ENCODE measurements at regions of chr11 and their contacts with region 1.

Region 1: DNA sequence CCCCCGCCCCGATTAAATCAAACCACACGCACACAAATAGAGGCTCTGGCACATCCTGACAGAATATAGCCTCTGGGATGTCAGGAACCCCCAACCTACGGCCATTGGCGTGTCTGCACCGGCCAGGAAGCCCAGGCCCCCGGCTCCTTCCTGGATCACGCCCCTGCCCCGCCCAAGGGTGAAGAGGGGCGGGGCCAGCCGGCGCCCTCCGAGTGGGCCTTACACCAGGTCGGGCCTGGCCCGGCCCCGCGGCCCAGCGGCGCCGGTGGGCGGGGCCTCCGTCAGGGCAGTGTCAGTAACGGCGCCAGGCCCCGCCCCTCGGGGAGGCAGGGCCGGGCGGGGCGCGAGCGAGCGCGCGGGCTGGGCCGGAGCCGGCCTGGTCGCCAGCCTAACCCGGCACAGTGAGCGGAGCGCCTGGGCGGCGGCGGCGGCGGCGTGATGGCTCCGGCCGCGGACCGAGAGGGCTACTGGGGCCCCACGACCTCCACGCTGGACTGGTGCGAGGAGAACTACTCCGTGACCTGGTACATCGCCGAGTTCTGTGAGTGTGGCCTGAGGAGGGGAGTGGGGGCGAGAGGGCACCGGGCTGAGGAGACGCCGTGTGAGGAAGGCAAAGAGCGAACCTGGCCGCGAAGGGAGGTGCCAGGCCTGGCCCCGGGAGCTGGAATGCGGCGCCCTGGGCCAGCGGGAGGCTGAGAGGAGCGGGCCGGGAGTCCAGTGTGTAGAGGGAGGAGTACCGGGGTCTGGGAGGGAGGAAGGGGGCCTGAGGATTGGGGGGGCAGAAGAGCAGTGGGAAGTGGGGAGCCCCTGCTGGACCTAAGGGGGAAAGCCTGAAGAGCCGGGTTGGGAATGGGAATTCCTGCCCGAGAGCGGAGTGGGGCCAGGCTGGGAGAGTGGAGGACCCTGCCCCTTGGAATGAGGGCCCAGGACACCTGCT is at the start of gene ACER3:
- DNase-seq: peak; percentile 89 to 95
- ATAC-seq: peak; percentile 97 to 100 (median 98)
- H3K4me3 ChIP-seq: peak within 1 kb of the TSS; percentile 62 to 94 (median 82)
- H3K27ac ChIP-seq: peak within 1 kb of the TSS; percentile 63 to 95 (median 89)
- H3K4me1 ChIP-seq: peaks cover 0 to 70% (median 32%) of the 10 kb centered on the region in 9 donors
- H3K27me3 ChIP-seq: no peaks in the 10 kb centered on the region
- CTCF ChIP-seq: peak in 4 of 9 donors; percentile 12 to 36 (median 32)
- total RNA-seq, gene ACER3: 8.9 to 14.8 (median 10.6) TPM

Region 2: GRCh38 chr11:76903329-76903728 is 42.5 kb after region 1 on chr11:
- intact Hi-C with region 1: loop called in 1 of 10 experiments (anchors 5 kb)
- DNase-seq: no peak
- ATAC-seq: no peak
- H3K4me3 ChIP-seq: no peak overlapping the region
- H3K27ac ChIP-seq: no peak overlapping the region
- H3K4me1 ChIP-seq: peaks cover 0 to 3% (median 0%) of the 10 kb centered on the region in 9 donors
- H3K27me3 ChIP-seq: no peaks in the 10 kb centered on the region
- CTCF ChIP-seq: no peak

Region 3: GRCh38 chr11:77039491-77040400 is 178.9 kb after region 1 on chr11:
- intact Hi-C with region 1: no loop called
- DNase-seq: peak in 1 of 2 donors; percentile 28
- ATAC-seq: peak; percentile 35 to 80 (median 45)
- H3K4me3 ChIP-seq: peak overlapping the region; percentile 12 to 54 (median 42)
- H3K27ac ChIP-seq: no peak overlapping the region
- H3K4me1 ChIP-seq: peaks cover 2 to 14% (median 11%) of the 10 kb centered on the region in 9 donors
- H3K27me3 ChIP-seq: peaks cover 7 to 74% (median 66%) of the 10 kb centered on the region in 7 donors
- CTCF ChIP-seq: peak in 7 of 9 donors; percentile 34 to 55 (median 46)

Region 4: DNA sequence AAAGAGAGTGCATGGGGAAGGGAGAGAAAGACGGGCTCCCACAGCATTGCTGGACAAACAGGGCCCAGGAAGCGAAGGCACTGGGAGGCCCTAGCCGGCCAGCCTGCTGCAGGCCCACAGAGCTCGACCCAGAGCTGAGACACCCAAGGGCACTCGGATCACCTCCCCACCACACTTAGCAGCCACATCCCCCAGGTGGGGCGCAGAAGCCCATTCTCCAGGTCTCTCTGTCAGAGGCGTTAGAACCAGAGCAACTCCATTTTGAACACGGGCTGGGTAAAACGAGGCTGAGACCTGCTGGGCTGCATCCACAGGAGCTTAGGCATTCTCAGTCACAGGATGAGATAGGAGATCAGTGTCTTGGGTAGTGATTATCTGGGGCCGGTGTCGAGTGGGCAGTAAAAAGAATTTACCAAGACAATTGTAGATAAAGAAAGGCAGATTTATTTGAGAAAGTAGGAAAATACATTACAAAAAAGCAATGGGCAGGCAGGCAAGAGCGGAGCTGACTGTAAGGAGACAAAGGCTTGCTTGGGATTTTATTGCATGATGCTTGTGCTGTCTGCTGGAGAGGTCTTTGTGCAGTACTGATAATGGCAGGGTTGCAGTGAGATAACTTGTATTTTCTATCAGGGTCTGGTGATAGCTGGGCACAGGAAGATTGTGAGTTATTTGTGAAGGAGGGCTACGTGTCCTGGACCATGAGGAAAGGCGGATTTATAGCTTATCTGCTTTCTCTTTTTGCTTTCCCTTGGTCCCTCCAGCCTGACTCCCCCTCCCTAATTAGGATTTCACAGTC is 192.6 kb after region 1 on chr11:
- intact Hi-C with region 1: no loop called
- DNase-seq: no peak
- ATAC-seq: no peak
- H3K4me3 ChIP-seq: no peak overlapping the region
- H3K27ac ChIP-seq: no peak overlapping the region
- H3K4me1 ChIP-seq: no peaks in the 10 kb centered on the region
- H3K27me3 ChIP-seq: no peaks in the 10 kb centered on the region
- CTCF ChIP-seq: no peak